ENCODE measurements at regions of chr12 and their contacts with region 1.

Region 1: GRCh38 chr12:94704452-94705306 is 54.3 kb upstream of the TMCC3 start:
- DNase-seq: no peak
- ATAC-seq: peak in 3 of 4 donors; percentile 18 to 75 (median 67)
- H3K4me3 ChIP-seq: no peak overlapping the region
- H3K27ac ChIP-seq: peak overlapping the region; percentile 7
- H3K4me1 ChIP-seq: peaks cover 19% of the 10 kb centered on the region
- H3K27me3 ChIP-seq: no peaks in the 10 kb centered on the region
- CTCF ChIP-seq: no peak

Region 2: DNA sequence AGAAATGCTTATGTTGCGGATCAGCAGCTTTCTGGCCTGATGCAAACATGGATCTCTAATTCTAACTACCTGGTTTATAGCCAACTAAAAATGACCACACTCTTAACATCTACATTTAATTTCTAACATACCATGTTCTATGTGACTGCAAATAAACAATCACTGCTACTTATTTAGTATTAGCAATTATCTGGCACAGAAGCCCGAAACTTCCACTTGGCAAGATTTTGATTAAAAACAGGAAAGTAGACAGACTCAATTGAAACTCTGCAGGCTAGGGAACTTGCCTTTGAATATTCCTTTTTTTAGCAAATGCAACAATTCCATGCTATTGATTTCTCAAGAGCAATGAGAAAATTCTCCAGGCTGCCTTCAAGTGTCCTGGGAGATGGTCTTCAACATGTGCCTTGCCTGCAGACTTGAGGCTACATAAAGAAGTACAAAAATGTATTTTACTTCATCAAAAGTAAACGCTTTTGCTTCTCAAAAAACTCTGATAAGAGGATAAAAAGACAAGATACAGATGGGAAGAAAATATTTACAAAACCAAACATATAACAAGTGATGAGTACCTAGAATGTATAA is 45.2 kb before region 1 on chr12:
- intact Hi-C with region 1: loop called in 1 of 2 experiments (anchors 5 kb)
- DNase-seq: no peak
- ATAC-seq: no peak
- H3K4me3 ChIP-seq: no peak overlapping the region
- H3K27ac ChIP-seq: no peak overlapping the region
- H3K4me1 ChIP-seq: peaks cover 5% of the 10 kb centered on the region
- H3K27me3 ChIP-seq: no peaks in the 10 kb centered on the region
- CTCF ChIP-seq: no peak

Region 3: GRCh38 chr12:94669901-94670466 is 34.7 kb before region 1 on chr12:
- intact Hi-C with region 1: loop called in 1 of 2 experiments (anchors 5 kb)
- DNase-seq: no peak
- ATAC-seq: no peak
- H3K4me3 ChIP-seq: no peak overlapping the region
- H3K27ac ChIP-seq: no peak overlapping the region
- H3K4me1 ChIP-seq: no peaks in the 10 kb centered on the region
- H3K27me3 ChIP-seq: no peaks in the 10 kb centered on the region
- CTCF ChIP-seq: no peak

Measured in psoas muscle (tissue), 8 donors.